Activated CD8-positive, alpha-beta T cell treated with anti-CD3 and anti-CD28 coated beads for 36 hours (primary cell): ENCODE measurements at regions of chr10 and their contacts with region 1.

Region 1: GRCh38 chr10:71608819-71609768 is 110.5 kb downstream of the C10orf105 start:
- DNase-seq: peak; percentile 90
- ATAC-seq: peak; percentile 73
- H3K4me3 Mint-ChIP-seq: no peak overlapping the region
- H3K27ac Mint-ChIP-seq: no peak overlapping the region
- H3K4me1 Mint-ChIP-seq: peaks cover 2% of the 10 kb centered on the region
- H3K27me3 Mint-ChIP-seq: peaks cover 2% of the 10 kb centered on the region
- CTCF ChIP-seq: peak; percentile 66

Region 2: GRCh38 chr10:71383972-71384687 is 225.0 kb before region 1 on chr10:
- CTCF ChIA-PET with region 1: interaction called, 17 read pairs
- POLR2A ChIA-PET with region 1: no interaction called
- intact Hi-C with region 1: no loop called
- DNase-seq: peak; percentile 84
- ATAC-seq: peak; percentile 97
- H3K4me3 Mint-ChIP-seq: no peak overlapping the region
- H3K27ac Mint-ChIP-seq: no peak overlapping the region
- H3K4me1 Mint-ChIP-seq: no peaks in the 10 kb centered on the region
- H3K27me3 Mint-ChIP-seq: peaks cover 2% of the 10 kb centered on the region
- CTCF ChIP-seq: peak; percentile 88

Region 3: GRCh38 chr10:71396084-71396720 is 212.9 kb before region 1 on chr10:
- CTCF ChIA-PET with region 1: interaction called, 10 read pairs
- POLR2A ChIA-PET with region 1: no interaction called
- intact Hi-C with region 1: loop called (anchors 10 kb)
- DNase-seq: peak; percentile 59
- ATAC-seq: peak; percentile 80
- H3K4me3 Mint-ChIP-seq: peak overlapping the region; percentile 22
- H3K27ac Mint-ChIP-seq: no peak overlapping the region
- H3K4me1 Mint-ChIP-seq: no peaks in the 10 kb centered on the region
- H3K27me3 Mint-ChIP-seq: peaks cover 51% of the 10 kb centered on the region
- CTCF ChIP-seq: peak; percentile 4

Region 4: GRCh38 chr10:71475243-71475871 is 133.7 kb before region 1 on chr10:
- CTCF ChIA-PET with region 1: no interaction called
- POLR2A ChIA-PET with region 1: no interaction called
- intact Hi-C with region 1: no loop called
- DNase-seq: no peak
- ATAC-seq: no peak
- H3K4me3 Mint-ChIP-seq: no peak overlapping the region
- H3K27ac Mint-ChIP-seq: no peak overlapping the region
- H3K4me1 Mint-ChIP-seq: no peaks in the 10 kb centered on the region
- H3K27me3 Mint-ChIP-seq: peaks cover 5% of the 10 kb centered on the region
- CTCF ChIP-seq: no peak

Region 5: DNA sequence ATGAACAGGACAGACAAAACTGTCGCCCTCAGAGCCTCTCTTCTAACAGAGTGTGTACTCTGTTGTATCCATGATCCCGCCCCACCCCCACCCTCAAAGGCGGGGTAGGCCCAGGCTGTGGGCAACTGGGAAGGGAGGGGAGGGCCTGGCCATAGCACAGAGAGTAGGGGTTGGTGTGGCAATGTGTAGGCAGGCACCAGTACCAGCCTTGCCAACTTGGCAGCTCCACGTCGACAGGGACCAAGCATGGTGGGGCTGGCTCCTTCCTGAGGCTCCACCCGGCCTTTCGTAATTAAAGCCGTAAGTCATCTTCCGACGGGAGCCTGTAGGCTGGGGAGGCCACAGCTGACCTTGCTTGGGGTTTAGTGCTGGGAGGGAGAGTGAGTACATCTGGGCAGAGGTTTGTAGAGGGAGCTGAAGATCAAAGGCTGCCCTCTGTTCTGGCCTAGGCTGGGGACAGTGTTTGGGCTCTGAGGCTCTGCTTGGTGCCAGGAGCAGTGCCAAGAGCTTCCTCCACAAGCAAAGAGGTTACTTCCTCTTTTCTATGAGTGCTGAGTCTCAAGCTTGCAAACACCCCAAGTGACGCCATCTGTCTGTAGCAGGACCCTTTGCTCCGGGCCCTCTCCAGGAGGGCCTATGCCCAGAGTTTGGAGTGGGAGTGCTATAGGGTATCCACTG is 11.1 kb before region 1 on chr10:
- CTCF ChIA-PET with region 1: interaction called, 12 read pairs
- POLR2A ChIA-PET with region 1: interaction called, 4 read pairs
- intact Hi-C with region 1: no loop called
- DNase-seq: no peak
- ATAC-seq: no peak
- H3K4me3 Mint-ChIP-seq: no peak overlapping the region
- H3K27ac Mint-ChIP-seq: no peak overlapping the region
- H3K4me1 Mint-ChIP-seq: peaks cover 12% of the 10 kb centered on the region
- H3K27me3 Mint-ChIP-seq: no peaks in the 10 kb centered on the region
- CTCF ChIP-seq: no peak

Region 6: GRCh38 chr10:71638064-71638821 is 29.1 kb after region 1 on chr10:
- CTCF ChIA-PET with region 1: interaction called, 11 read pairs
- POLR2A ChIA-PET with region 1: no interaction called
- intact Hi-C with region 1: no loop called
- DNase-seq: no peak
- ATAC-seq: no peak
- H3K4me3 Mint-ChIP-seq: no peak overlapping the region
- H3K27ac Mint-ChIP-seq: no peak overlapping the region
- H3K4me1 Mint-ChIP-seq: peaks cover 2% of the 10 kb centered on the region
- H3K27me3 Mint-ChIP-seq: no peaks in the 10 kb centered on the region
- CTCF ChIP-seq: no peak

Region 7: GRCh38 chr10:72009411-72010081 is 400.5 kb after region 1 on chr10:
- CTCF ChIA-PET with region 1: no interaction called
- POLR2A ChIA-PET with region 1: no interaction called
- intact Hi-C with region 1: no loop called
- DNase-seq: no peak
- ATAC-seq: no peak
- H3K4me3 Mint-ChIP-seq: no peak overlapping the region
- H3K27ac Mint-ChIP-seq: no peak overlapping the region
- H3K4me1 Mint-ChIP-seq: no peaks in the 10 kb centered on the region
- H3K27me3 Mint-ChIP-seq: no peaks in the 10 kb centered on the region
- CTCF ChIP-seq: no peak